Endothelial cell of umbilical vein (primary cell): ENCODE measurements at regions of chr19 and their contacts with region 1.

Region 1: GRCh38 chr19:18058208-18059030 is 28.3 kb downstream of the IL12RB1 start:
- DNase-seq: peak; percentile 78
- H3K4me3 ChIP-seq: no peak overlapping the region
- H3K27ac ChIP-seq: no peak overlapping the region
- H3K4me1 ChIP-seq: peaks cover 5% of the 10 kb centered on the region
- H3K27me3 ChIP-seq: no peaks in the 10 kb centered on the region
- CTCF ChIP-seq: peak; percentile 78 to 87
- POLR2A ChIP-seq: no peak

Region 2: DNA sequence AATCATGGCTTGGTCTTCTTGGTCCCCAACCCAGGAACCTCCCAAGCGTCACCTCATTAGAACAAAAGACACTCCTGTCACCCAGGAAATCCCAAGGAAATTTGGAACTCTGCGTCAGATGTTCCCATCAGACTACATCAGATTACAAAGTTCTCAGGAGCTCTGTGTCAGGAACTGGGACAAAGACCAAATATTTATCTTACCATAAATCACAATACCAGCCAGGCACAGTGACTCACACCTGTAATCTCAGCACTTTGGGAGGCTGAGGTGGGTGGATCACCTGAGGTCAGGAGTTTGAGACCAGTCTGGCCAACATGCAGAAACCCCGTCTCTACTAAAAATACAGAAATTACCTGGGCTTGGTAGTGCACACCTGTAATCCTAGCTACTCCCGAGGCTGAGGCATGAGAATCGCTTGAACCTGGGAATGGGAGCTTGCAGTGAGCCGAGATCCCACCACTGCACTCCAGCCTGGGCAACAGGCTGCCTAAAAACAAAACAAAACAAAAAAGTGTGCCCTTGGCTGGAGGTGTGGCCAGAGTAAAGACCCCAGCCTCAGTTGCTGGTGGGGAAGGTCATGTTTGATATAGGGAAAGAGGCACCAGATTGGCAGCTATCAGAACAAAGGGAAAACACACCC is 142.3 kb before region 1 on chr19:
- CTCF ChIA-PET with region 1: no interaction called
- POLR2A ChIA-PET with region 1: no interaction called
- dilution Hi-C with region 1: no loop called
- intact Hi-C with region 1: no loop called
- DNase-seq: no peak
- H3K4me3 ChIP-seq: no peak overlapping the region
- H3K27ac ChIP-seq: no peak overlapping the region
- H3K4me1 ChIP-seq: no peaks in the 10 kb centered on the region
- H3K27me3 ChIP-seq: no peaks in the 10 kb centered on the region
- CTCF ChIP-seq: no peak
- POLR2A ChIP-seq: no peak

Region 3: DNA sequence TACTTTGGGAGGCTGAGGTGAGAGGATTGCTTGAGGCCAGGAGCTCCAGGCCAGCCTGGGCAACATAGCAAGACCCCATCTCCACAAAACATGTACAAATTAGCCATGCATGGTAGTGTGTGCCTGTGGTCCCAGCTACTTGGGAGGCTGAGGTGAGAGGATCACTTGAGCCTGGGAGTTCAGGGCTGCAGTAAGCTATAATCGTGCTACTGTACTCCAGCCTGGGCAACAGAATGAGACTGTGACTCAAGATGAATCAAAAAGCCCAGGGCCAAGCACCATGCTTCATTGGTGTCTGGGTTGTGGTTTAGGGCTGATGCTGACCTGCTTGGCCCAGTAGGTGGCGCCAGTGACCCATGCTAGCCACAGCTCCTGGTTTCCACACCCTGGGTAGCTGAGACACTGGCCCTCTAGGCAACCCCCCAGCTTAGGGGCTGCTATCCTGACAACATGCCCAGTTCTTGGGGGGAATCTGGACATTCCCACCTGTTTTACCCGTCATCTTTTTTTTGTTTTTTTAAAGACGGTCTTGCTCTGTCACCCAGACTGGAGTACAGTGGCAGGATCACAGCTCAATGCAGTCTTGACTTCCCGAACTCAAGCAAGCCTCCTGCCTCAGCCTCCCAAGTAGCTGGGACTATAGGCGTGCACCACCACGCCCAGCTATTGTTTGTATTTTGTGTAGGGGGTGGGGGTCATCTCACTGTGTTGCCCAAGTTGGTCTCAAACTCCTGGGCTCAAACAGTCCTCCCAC is 120.2 kb before region 1 on chr19:
- CTCF ChIA-PET with region 1: interaction called, 4 read pairs
- POLR2A ChIA-PET with region 1: no interaction called
- dilution Hi-C with region 1: no loop called
- intact Hi-C with region 1: loop called (anchors 5 kb)
- DNase-seq: peak; percentile 64
- H3K4me3 ChIP-seq: no peak overlapping the region
- H3K27ac ChIP-seq: no peak overlapping the region
- H3K4me1 ChIP-seq: peaks cover 7% of the 10 kb centered on the region
- H3K27me3 ChIP-seq: no peaks in the 10 kb centered on the region
- CTCF ChIP-seq: peak; percentile 87 to 96
- POLR2A ChIP-seq: no peak

Region 4: DNA sequence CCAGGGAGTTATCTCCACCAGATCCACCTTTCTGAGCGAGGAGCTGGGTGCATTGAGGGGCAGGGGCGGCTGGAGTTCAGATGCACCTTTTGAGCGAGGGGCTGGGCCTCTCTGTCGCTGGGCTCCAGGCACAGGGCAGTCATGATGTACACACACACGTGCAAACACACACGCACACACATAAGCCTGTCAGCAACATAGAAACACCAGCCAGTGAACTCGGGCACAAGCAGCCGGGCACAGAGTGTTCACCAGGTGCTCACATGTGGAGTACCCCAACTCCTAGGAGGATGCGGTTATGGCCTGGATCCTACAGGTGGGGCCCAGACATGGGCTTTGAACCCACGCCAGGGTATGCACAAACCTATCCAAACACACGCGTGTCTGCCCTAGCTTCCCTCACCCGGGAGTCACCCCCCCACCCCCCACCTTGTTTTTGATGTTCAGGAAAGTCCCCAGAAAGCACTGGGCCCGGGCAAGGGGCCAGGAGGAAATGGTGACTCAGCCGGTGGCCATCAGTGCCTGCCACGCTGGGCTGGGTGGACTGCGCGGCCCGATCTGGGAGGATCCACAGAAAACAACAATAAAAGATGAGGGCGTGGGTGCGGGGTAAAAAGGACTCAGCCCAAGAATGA is 37.2 kb before region 1 on chr19:
- CTCF ChIA-PET with region 1: interaction called, 5 read pairs
- POLR2A ChIA-PET with region 1: interaction called, 3 read pairs
- dilution Hi-C with region 1: no loop called
- intact Hi-C with region 1: loop called (anchors 5 kb)
- DNase-seq: peak; percentile 97
- H3K4me3 ChIP-seq: no peak overlapping the region
- H3K27ac ChIP-seq: peak overlapping the region; percentile 92
- H3K4me1 ChIP-seq: peaks cover 49% of the 10 kb centered on the region
- H3K27me3 ChIP-seq: no peaks in the 10 kb centered on the region
- CTCF ChIP-seq: no peak
- POLR2A ChIP-seq: no peak

Region 5: DNA sequence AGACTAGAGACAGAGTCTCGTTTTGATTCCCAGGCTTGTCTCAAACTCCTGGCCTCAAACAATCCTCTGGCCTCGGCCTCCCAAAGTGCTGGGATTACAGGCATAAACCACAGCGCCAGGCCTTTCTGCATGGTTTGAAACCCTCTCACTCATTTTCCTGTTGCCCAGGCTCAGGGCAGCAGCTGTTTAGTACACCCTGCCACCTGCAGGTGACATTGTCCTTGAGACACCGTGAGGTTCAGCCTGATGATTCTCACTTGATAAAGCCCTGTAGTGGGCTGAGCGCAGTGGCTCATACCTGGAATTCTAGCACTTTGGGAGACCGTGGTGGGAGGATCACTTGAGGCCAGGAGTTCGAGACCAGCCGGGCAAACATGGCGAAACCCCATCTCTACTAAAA is 15.8 kb after region 1 on chr19:
- CTCF ChIA-PET with region 1: no interaction called
- POLR2A ChIA-PET with region 1: no interaction called
- dilution Hi-C with region 1: no loop called
- intact Hi-C with region 1: no loop called
- DNase-seq: no peak
- H3K4me3 ChIP-seq: no peak overlapping the region
- H3K27ac ChIP-seq: no peak overlapping the region
- H3K4me1 ChIP-seq: no peaks in the 10 kb centered on the region
- H3K27me3 ChIP-seq: no peaks in the 10 kb centered on the region
- CTCF ChIP-seq: no peak
- POLR2A ChIP-seq: no peak